Ovary (tissue), 10 donors: ENCODE measurements at regions of chr7 and their contacts with region 1.

Region 1: DNA sequence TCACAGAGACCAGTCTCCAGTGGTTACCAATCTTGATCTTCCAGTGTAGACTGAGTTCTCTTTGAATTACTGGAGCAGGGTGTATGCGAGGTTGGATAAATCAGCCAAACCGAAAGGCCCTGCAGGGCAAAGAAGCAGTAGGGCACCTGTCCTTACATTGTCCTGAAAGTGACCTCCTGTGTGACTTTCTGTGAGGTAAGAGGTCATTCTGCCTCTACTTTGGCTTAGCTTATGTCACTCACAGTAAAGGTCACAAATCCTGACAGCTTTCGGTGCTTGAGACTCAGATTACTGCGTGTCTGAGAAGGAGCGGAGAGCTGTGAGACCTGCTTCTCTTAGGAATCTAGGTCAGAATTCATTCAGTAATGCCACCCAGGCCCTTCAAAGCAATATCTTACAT is 252.7 kb upstream of the ETV1 start:
- DNase-seq: no peak
- H3K4me3 ChIP-seq: no peak overlapping the region
- H3K27ac ChIP-seq: no peak overlapping the region
- H3K4me1 ChIP-seq: no peaks in the 10 kb centered on the region
- H3K27me3 ChIP-seq: no peaks in the 10 kb centered on the region
- CTCF ChIP-seq: no peak
- EP300 ChIP-seq: no peak
- POLR2A ChIP-seq: no peak

Region 2: GRCh38 chr7:14403587-14403986 is 161.4 kb after region 1 on chr7:
- intact Hi-C with region 1: loop called in 1 of 4 experiments (anchors 5 kb)
- DNase-seq: no peak
- H3K4me3 ChIP-seq: no peak overlapping the region
- H3K27ac ChIP-seq: no peak overlapping the region
- H3K4me1 ChIP-seq: no peaks in the 10 kb centered on the region
- H3K27me3 ChIP-seq: no peaks in the 10 kb centered on the region
- CTCF ChIP-seq: no peak
- EP300 ChIP-seq: no peak
- POLR2A ChIP-seq: no peak